MCF 10A (cell line): ENCODE measurements at regions of chr9 and their contacts with region 1.

Region 1: DNA sequence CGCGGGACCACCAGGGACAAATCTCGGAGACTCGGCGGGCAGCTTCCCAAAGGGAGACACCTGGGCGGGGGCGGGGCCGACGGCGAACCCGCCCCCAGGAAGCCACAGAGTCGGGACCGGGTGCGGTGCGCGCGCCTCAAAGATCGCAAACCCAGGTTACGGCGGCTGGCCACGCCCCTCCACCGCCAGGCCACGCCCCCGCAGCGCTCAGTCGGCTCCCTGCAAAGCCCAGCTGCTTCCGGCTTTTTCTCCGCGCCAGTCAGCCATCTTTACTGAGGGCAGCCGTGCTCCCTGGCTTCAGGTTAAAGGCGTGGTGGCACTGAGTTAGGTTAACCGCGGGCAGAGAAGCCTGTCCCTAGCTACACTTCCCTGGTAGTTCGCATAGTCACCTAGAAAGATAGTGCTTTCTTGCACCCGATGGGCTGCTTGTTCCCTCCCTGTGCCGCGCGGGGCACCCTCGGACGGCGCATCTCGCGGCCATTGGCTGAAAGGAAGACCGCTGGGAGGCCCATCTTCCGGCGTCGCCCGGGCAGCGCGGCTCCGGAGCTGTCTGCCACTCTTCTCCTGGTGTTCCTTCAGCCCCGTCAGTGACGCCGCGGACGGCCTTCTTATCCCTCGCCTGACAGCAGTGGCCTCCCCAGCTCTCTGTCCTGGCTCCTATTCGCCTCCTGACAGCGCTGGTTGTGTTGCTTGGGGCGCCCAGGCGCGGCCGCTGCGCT is at the start of gene TBC1D2:
- DNase-seq: peak; percentile 94
- H3K4me3 Mint-ChIP-seq: peak within 1 kb of the TSS; percentile 96
- H3K27ac Mint-ChIP-seq: peak within 1 kb of the TSS; percentile 98
- H3K4me1 Mint-ChIP-seq: peaks cover 42% of the 10 kb centered on the region
- H3K27me3 Mint-ChIP-seq: no peaks in the 10 kb centered on the region
- CTCF ChIP-seq: no peak
- total RNA-seq, gene TBC1D2: 58.4 and 62.7 TPM in 2 replicates

Region 2: DNA sequence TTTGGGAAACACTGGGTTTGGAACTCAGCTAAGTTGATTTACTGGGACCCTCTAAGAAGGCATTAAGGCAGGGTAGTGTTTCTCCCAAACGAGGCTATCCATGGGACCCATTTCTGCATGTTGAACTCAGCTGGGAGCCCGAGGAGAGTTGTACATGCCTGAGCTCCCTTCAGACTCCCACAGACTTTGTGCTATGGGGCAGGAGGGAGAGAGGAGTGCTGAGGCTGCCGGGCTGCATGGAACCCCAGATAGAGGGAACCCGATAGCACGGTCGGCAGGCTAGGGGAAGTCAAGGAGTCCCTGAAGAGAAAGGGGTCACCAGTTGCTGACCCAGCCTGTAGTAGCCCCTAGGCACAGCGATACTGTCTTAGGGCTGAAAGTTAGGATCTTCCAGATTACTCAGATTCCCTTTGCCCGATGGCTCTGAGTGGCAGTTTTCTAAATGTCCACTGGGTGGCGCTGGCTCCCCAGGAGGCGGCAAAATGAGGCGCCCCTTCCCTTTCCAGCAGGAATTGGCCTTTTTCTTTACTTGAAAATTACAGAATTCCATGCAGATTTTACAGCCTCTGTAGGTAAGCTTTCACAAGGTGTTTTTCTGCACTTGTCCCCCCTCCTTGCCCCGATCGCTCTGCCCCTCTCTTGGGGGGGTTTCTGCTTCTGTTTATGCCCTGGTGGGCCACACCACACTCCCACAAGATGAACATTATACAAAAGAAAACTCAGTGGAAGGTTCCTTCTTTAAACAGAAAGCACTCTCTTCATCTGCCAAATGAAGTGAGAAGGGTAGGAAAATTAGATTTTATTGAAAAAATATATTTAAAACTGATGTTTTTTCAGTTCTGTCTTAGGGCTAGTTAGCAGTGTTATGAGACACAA is 181.4 kb before region 1 on chr9:
- CTCF ChIA-PET with region 1: interaction called, 11 read pairs
- POLR2A ChIA-PET with region 1: interaction called, 9 read pairs
- intact Hi-C with region 1: no loop called
- DNase-seq: peak; percentile 64
- H3K4me3 Mint-ChIP-seq: no peak overlapping the region
- H3K27ac Mint-ChIP-seq: peak overlapping the region; percentile 61
- H3K4me1 Mint-ChIP-seq: no peaks in the 10 kb centered on the region
- H3K27me3 Mint-ChIP-seq: no peaks in the 10 kb centered on the region
- CTCF ChIP-seq: peak; percentile 90

Region 3: GRCh38 chr9:98192503-98193335 is 63.0 kb before region 1 on chr9 and contains the start of gene CORO2A:
- CTCF ChIA-PET with region 1: interaction called, 6 read pairs
- POLR2A ChIA-PET with region 1: interaction called, 31 read pairs
- intact Hi-C with region 1: no loop called
- DNase-seq: peak; percentile 80
- H3K4me3 Mint-ChIP-seq: peak within 1 kb of the TSS; percentile 77
- H3K27ac Mint-ChIP-seq: no peak within 1 kb of the TSS
- H3K4me1 Mint-ChIP-seq: peaks cover 6% of the 10 kb centered on the region
- H3K27me3 Mint-ChIP-seq: no peaks in the 10 kb centered on the region
- CTCF ChIP-seq: peak; percentile 17
- total RNA-seq, gene CORO2A: 3.4 and 3.9 TPM in 2 replicates

Region 4: DNA sequence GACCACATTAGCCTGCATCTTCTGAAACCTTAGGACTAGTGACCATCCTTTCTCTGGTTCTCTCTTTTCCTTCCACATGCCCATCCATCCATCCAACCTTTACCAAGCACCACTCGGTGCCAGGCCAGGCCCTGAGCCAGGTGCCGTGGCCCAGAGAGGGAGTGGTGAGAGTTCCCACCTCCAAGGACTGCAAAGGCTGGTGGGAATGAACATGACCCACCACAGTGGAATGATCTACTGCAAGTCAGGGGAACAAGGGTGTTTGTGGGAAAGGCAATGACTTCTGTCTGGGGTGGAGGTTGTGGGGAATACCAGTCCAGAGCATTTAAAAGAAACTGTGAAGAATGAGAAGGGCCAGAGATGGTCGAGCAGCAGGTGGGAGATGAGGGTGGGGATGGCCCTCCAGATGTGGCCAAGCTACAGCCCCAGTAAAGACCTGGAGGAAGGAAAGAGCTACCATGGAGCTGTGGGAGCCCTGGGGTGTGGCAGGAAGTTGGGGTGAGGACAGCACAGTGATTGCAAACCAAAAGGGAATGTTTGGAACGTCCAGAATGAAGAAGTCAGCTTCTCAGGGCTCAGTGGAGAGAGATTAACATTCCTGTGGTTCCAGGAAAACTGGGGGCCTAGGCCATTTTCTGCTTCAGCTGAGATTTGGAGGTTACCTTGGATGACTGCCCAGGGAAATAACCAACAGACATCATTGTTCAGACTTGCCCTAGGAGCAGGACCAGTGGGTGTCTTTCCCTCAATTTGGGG is 32.7 kb before region 1 on chr9:
- CTCF ChIA-PET with region 1: interaction called, 10 read pairs
- POLR2A ChIA-PET with region 1: interaction called, 91 read pairs
- intact Hi-C with region 1: loop called (anchors 1 kb)
- DNase-seq: peak; percentile 99
- H3K4me3 Mint-ChIP-seq: peak overlapping the region; percentile 4
- H3K27ac Mint-ChIP-seq: peak overlapping the region; percentile 77
- H3K4me1 Mint-ChIP-seq: peaks cover 26% of the 10 kb centered on the region
- H3K27me3 Mint-ChIP-seq: no peaks in the 10 kb centered on the region
- CTCF ChIP-seq: no peak

Region 5: DNA sequence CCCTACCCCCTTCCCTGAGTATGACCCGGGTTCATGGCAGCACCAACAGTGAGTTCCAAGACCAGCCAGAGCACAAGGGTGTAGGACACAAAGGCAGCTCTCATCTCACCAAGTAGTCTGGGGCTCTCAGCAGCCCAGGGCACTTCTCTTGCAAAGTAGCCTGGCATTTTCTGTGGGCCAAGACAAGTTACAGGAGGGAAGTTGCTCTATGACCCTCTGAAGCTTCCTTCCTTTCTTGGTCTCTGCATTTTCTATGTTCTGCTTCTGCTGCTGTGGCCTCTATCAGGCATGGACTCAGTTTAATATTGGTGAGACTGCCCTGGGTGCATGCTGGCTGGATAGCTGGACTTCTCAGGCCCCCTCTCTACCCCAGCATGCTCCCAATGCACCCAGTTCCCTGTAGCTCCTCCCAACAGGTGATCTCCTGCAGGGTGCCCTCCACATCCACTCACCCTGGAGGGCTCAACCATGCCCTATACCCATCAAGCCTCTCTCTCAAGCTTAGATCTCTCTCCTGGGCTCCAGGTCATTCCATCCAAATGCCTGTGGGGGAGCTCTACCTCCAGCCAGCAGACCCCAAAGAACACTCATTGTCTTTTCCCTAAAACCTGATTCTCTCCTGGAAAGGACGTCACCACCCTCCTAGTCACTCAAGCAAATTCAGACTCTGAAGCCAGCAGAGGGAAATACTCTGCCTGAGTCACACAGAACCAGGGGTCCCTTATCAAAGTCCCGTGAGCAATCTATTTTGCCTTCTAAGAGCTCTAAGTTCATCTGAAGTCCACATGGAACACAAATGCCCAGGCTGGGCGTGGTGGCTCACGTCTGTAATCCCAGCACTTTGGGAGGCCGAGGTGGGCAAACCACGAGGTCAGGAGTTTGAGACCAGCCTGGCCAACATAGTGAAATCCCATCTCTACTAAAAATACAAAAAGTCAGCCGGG is 14.1 kb before region 1 on chr9:
- CTCF ChIA-PET with region 1: interaction called, 6 read pairs
- POLR2A ChIA-PET with region 1: interaction called, 21 read pairs
- intact Hi-C with region 1: no loop called
- DNase-seq: no peak
- H3K4me3 Mint-ChIP-seq: no peak overlapping the region
- H3K27ac Mint-ChIP-seq: peak overlapping the region; percentile 17
- H3K4me1 Mint-ChIP-seq: peaks cover 22% of the 10 kb centered on the region
- H3K27me3 Mint-ChIP-seq: no peaks in the 10 kb centered on the region
- CTCF ChIP-seq: no peak

Region 6: GRCh38 chr9:98916660-98917059 is 660.9 kb after region 1 on chr9:
- CTCF ChIA-PET with region 1: no interaction called
- POLR2A ChIA-PET with region 1: no interaction called
- intact Hi-C with region 1: no loop called
- DNase-seq: no peak
- H3K4me3 Mint-ChIP-seq: no peak overlapping the region
- H3K27ac Mint-ChIP-seq: no peak overlapping the region
- H3K4me1 Mint-ChIP-seq: no peaks in the 10 kb centered on the region
- H3K27me3 Mint-ChIP-seq: peaks cover 13% of the 10 kb centered on the region
- CTCF ChIP-seq: no peak